ENCODE measurements at regions of chr2 and their contacts with region 1.

Region 1: GRCh38 chr2:120758181-120759144 is 22.8 kb downstream of the GLI2 start:
- DNase-seq: peak; percentile 92
- ATAC-seq: peak; percentile 90
- H3K4me3 ChIP-seq: no peak overlapping the region
- H3K27ac ChIP-seq: peak overlapping the region; percentile 88
- H3K4me1 ChIP-seq: peaks cover 49% of the 10 kb centered on the region
- H3K27me3 ChIP-seq: no peaks in the 10 kb centered on the region
- CTCF ChIP-seq: no peak
- POLR2A ChIP-seq: peak; percentile 53; the same call in 1 of the 2 replicates
- RAD21 ChIP-seq: no peak

Region 2: DNA sequence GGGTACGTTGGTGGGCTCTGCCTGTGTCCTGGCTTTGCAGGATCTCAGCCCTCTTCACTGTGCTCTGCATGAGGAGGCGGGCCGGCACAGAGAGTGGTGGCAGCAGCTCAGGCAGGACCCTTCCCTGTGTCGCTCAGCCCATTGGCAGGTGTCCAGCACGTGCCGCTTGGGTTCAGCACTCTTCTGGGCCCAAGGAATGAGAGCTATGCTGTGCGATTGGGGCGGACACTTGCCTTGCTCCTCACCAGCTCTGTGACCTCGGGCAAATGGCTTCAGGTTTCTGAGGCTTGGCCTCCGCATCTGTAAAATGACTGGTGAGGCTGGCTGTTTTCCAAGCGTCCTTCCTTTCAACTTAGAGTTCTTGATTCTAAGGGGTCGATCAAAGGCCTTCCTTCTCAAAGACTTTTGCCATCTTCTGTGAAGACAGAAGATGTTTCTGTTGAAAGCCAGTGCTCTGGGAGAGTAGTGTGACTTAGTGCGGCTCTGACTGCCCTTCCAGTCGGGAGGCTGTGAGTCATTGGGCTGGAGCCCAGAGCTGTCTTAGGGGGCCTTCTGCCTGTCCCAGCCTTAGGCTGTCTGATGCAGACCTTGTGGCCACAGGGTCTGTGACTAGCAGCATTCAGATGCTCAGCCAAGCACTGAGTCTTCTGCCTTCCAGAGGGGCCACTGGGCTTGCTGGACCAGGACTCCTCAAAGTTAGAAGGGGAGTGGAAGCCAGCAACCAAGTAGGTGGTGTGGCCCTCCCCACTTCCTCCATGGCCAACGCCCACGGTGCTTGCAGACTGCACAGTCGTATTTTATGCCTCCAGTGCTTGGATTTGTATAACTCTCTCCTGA is 12.9 kb after region 1 on chr2:
- CTCF ChIA-PET with region 1: no interaction called
- POLR2A ChIA-PET with region 1: interaction called, 20 read pairs
- dilution Hi-C with region 1: no loop called
- in situ Hi-C with region 1: no loop called
- intact Hi-C with region 1: no loop called
- DNase-seq: peak; percentile 95
- ATAC-seq: peak; percentile 91
- H3K4me3 ChIP-seq: no peak overlapping the region
- H3K27ac ChIP-seq: peak overlapping the region; percentile 82
- H3K4me1 ChIP-seq: peaks cover 55% of the 10 kb centered on the region
- H3K27me3 ChIP-seq: no peaks in the 10 kb centered on the region
- CTCF ChIP-seq: no peak
- POLR2A ChIP-seq: peak; percentile 79
- RAD21 ChIP-seq: peak; percentile 31